ENCODE measurements at regions of chr11 and their contacts with region 1.

Region 1: DNA sequence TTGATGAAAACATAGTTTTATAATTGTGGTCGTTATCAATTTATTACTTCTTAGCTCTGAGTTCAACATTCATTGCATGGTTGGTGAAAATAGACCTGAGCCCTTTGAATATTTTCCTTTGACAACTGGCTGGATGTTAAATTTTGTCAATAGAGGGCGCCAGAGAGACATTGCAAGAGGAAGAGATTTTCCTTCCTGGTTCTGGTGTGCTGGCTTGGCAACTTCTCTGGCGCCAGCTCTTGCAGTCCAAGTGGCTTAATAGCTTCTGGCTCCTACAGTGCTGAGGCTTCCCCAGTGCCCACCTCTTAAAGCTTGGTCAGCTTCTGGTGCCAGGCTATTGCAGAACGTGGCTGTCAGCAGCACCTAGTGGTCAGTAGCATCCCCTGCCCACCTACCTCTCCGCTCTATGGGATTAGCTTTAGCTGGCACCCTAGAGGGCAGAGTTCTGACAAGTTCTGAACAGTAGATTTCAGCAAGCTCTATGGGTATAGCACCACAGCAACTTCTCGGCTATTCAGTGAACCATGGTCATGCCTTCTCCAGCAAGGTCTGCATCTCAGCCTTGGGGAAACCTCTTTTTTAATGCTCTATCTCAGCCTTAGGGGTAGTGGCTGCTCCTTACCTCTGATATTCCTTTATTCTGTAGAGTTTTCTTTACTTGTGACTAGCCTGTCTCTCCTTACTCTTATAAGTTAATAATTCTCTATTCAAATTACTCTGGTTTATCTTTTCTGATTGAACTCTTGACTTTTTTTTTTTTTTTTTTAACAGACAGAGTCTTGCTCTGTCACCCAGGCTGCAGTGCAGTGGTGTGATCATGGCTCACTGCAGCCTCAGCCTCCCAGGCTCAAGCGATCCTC is 59.4 kb downstream of the ACER3 start:
- DNase-seq: peak; percentile 69
- ATAC-seq: peak; percentile 82
- H3K4me3 Mint-ChIP-seq: peak overlapping the region; percentile 38
- H3K27ac Mint-ChIP-seq: no peak overlapping the region
- H3K4me1 Mint-ChIP-seq: peaks cover 6% of the 10 kb centered on the region
- H3K27me3 Mint-ChIP-seq: no peaks in the 10 kb centered on the region
- CTCF ChIP-seq: peak; percentile 73

Region 2: DNA sequence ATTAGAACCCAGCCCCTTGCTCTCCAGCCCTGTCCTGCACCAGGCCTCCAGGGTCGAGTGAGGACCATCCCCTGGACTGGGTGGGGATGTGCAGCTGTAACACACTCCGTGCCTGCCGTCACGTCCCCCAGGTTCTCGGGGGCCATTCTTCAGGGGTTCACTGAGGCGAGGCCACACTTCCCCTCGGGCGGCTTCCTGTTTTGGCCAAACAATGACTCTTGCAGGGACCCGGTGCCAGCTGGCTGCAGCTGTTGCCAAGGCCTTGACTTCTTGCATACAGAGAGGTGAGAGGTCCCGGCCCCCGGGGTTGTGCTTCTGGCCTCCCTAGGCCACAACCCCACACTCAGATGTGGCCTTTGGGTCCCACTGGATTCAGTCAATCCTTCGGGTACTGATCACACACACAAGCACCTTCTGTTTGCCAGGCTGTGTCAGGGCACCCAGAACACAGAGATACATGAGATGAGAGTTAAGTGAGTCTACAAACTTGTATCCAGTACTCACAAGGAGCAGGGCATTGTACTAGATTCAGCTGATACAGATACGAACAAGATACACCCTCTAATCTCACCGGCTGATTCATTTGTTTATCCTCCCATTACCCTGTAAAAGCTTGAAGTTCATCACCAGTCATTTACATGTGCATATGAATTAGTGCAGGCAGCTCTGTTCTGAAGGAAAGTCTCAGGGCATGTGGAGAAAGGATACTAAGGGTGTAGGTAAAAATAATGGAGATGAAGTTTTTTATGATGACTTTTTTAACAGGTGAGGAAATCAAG is 282.4 kb before region 1 on chr11:
- CTCF ChIA-PET with region 1: no interaction called
- POLR2A ChIA-PET with region 1: no interaction called
- intact Hi-C with region 1: no loop called
- DNase-seq: peak; percentile 41
- ATAC-seq: peak; percentile 8
- H3K4me3 Mint-ChIP-seq: no peak overlapping the region
- H3K27ac Mint-ChIP-seq: peak overlapping the region; percentile 4
- H3K4me1 Mint-ChIP-seq: peaks cover 16% of the 10 kb centered on the region
- H3K27me3 Mint-ChIP-seq: peaks cover 22% of the 10 kb centered on the region
- CTCF ChIP-seq: no peak

Region 3: GRCh38 chr11:76721755-76722677 is 198.1 kb before region 1 on chr11:
- CTCF ChIA-PET with region 1: interaction called, 17 read pairs
- POLR2A ChIA-PET with region 1: no interaction called
- intact Hi-C with region 1: no loop called
- DNase-seq: peak; percentile 90
- ATAC-seq: peak; percentile 99
- H3K4me3 Mint-ChIP-seq: no peak overlapping the region
- H3K27ac Mint-ChIP-seq: no peak overlapping the region
- H3K4me1 Mint-ChIP-seq: peaks cover 2% of the 10 kb centered on the region
- H3K27me3 Mint-ChIP-seq: peaks cover 14% of the 10 kb centered on the region
- CTCF ChIP-seq: peak; percentile 85

Region 4: DNA sequence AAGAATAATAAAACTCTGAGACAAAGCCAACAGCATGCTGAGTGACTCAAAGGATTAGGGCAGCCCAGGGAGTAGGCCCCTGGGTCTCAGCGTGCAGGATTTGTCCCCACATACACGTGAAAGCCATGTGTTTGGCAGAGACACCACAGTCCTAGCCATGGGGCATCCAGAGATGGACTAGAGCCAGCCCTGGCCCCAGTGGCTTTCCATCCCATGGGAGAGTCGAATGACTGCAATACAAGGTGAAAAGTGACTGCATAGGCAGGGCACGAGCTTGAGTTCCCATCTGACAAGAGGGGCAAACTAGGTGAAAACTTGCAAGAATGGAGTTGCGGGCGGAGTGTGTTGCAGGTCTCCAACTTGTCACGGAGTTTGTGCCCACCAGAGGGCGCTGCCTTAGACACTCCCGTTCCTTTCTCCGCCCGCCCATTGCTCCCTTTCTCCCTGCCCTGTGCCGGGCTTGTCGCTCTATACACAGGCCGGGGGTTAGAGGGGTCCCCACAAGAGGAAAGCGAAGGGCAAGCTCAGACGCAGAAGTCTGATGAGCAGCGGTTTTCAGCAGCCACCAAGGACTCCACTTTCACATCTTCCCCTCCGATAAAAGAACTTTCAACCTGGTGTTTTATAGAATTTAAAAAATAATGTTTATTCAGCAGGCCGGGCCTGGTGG is 112.8 kb before region 1 on chr11:
- CTCF ChIA-PET with region 1: interaction called, 106 read pairs
- POLR2A ChIA-PET with region 1: no interaction called
- intact Hi-C with region 1: loop called (anchors 2 kb)
- DNase-seq: peak; percentile 91
- ATAC-seq: peak; percentile 31
- H3K4me3 Mint-ChIP-seq: no peak overlapping the region
- H3K27ac Mint-ChIP-seq: no peak overlapping the region
- H3K4me1 Mint-ChIP-seq: peaks cover 32% of the 10 kb centered on the region
- H3K27me3 Mint-ChIP-seq: peaks cover 3% of the 10 kb centered on the region
- CTCF ChIP-seq: peak; percentile 76

Region 5: DNA sequence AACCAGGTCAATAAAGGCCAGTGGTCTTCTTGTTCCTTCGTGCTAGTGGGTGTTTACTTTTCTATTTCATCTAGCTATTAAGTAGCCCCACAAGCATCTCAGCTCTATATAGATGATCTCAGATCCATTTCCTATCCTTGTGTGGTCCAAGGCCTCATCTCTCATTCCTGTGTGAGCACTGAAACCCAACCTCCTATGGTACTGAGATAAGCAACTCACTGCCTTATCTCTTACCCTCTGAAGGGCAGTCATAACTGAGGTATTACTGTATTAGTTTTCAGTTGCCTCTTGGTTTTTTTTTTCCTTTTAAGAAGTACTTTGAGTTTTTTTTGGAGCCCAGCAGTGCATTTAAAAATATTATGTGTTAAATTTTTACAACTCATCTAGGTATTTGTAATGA is 31.1 kb before region 1 on chr11:
- CTCF ChIA-PET with region 1: interaction called, 34 read pairs
- POLR2A ChIA-PET with region 1: no interaction called
- intact Hi-C with region 1: no loop called
- DNase-seq: no peak
- ATAC-seq: no peak
- H3K4me3 Mint-ChIP-seq: no peak overlapping the region
- H3K27ac Mint-ChIP-seq: no peak overlapping the region
- H3K4me1 Mint-ChIP-seq: peaks cover 10% of the 10 kb centered on the region
- H3K27me3 Mint-ChIP-seq: no peaks in the 10 kb centered on the region
- CTCF ChIP-seq: no peak

Region 6: GRCh38 chr11:76946245-76946644 is 26.1 kb after region 1 on chr11:
- CTCF ChIA-PET with region 1: interaction called, 24 read pairs
- POLR2A ChIA-PET with region 1: no interaction called
- intact Hi-C with region 1: no loop called
- DNase-seq: no peak
- ATAC-seq: no peak
- H3K4me3 Mint-ChIP-seq: no peak overlapping the region
- H3K27ac Mint-ChIP-seq: no peak overlapping the region
- H3K4me1 Mint-ChIP-seq: peaks cover 2% of the 10 kb centered on the region
- H3K27me3 Mint-ChIP-seq: no peaks in the 10 kb centered on the region
- CTCF ChIP-seq: no peak

Region 7: GRCh38 chr11:77019976-77020595 is 100.0 kb after region 1 on chr11:
- CTCF ChIA-PET with region 1: interaction called, 23 read pairs
- POLR2A ChIA-PET with region 1: no interaction called
- intact Hi-C with region 1: no loop called
- DNase-seq: no peak
- ATAC-seq: no peak
- H3K4me3 Mint-ChIP-seq: no peak overlapping the region
- H3K27ac Mint-ChIP-seq: no peak overlapping the region
- H3K4me1 Mint-ChIP-seq: peaks cover 4% of the 10 kb centered on the region
- H3K27me3 Mint-ChIP-seq: no peaks in the 10 kb centered on the region
- CTCF ChIP-seq: no peak

Region 8: GRCh38 chr11:77066229-77067042 is 146.3 kb after region 1 on chr11 and contains the start of gene CAPN5:
- CTCF ChIA-PET with region 1: interaction called, 11 read pairs
- POLR2A ChIA-PET with region 1: no interaction called
- intact Hi-C with region 1: no loop called
- DNase-seq: peak; percentile 87
- ATAC-seq: peak; percentile 95
- H3K4me3 Mint-ChIP-seq: peak within 1 kb of the TSS; percentile 77
- H3K27ac Mint-ChIP-seq: peak within 1 kb of the TSS; percentile 64
- H3K4me1 Mint-ChIP-seq: peaks cover 16% of the 10 kb centered on the region
- H3K27me3 Mint-ChIP-seq: no peaks in the 10 kb centered on the region
- CTCF ChIP-seq: peak; percentile 47
- total RNA-seq, gene CAPN5: 1.6 to 2.2 TPM

Measured in activated CD8-positive, alpha-beta T cell treated with anti-CD3 and anti-CD28 coated beads for 36 hours (primary cell).